Dendritic cell treated with granulocyte-macrophage colony-stimulating factor and Interleukin-4, amounts not matched to agents 40 ng/mL and 50 ng/mL, for 4 days (primary cell): ENCODE measurements at regions of chr12 and their contacts with region 1.

Region 1: DNA sequence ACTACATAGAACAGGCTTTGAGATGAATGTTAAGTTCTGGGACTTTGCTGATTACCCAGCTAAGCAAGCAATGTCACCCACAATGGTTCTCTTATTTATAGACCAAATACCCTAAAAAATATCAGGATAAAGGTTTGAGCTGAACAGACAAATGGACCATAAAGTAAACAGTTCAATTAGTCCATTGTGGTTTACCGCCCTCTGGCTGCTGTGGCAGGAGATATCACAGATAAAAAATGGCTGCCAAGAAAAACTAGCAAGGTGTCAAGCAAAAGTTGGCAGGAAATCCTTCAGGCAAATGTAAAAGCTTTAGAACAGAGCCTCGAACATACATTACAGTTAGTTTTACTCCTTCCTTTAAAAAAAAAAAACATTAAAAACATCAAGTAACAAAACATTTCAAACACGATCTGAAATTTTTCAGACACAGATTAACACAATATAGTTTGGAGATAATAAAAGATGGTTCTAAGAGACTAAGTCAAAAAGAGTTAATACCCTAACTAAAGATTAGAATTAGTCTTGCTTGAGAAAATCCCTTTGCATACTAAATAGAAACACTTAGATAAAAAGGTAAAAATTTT is 41.3 kb downstream of the MED13L start:
- H3K4me3 Mint-ChIP-seq: no peak overlapping the region
- H3K27ac Mint-ChIP-seq: no peak overlapping the region
- H3K4me1 Mint-ChIP-seq: peaks cover 26% of the 10 kb centered on the region
- H3K27me3 Mint-ChIP-seq: no peaks in the 10 kb centered on the region

Region 2: GRCh38 chr12:116066381-116067230 is 169.6 kb before region 1 on chr12:
- intact Hi-C with region 1: loop called (anchors 10 kb)
- H3K4me3 Mint-ChIP-seq: no peak overlapping the region
- H3K27ac Mint-ChIP-seq: no peak overlapping the region
- H3K4me1 Mint-ChIP-seq: peaks cover 47% of the 10 kb centered on the region
- H3K27me3 Mint-ChIP-seq: no peaks in the 10 kb centered on the region

Region 3: GRCh38 chr12:116142936-116143898 is 93.0 kb before region 1 on chr12:
- intact Hi-C with region 1: no loop called
- H3K4me3 Mint-ChIP-seq: peak overlapping the region; percentile 48
- H3K27ac Mint-ChIP-seq: peak overlapping the region; percentile 62
- H3K4me1 Mint-ChIP-seq: peaks cover 53% of the 10 kb centered on the region
- H3K27me3 Mint-ChIP-seq: no peaks in the 10 kb centered on the region

Region 4: DNA sequence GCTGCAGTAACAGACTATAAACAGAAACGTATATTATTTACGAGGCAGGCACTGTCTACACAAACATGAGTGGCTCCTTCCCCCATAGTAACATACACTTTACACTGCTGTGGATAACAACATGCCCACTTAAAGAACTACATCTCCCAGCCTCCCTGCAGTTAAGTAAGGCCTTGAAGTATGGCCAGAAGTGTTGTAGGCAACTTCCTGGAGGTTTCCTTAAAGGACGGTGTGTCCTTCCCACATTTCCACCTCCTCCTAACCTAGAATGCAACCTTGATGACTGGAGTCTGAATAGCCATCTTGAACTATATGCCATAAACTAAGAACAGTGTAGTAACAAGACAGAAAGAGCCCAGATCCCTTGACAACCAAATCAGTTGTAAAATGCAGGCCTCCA is 21.0 kb after region 1 on chr12:
- intact Hi-C with region 1: no loop called
- H3K4me3 Mint-ChIP-seq: no peak overlapping the region
- H3K27ac Mint-ChIP-seq: no peak overlapping the region
- H3K4me1 Mint-ChIP-seq: peaks cover 29% of the 10 kb centered on the region
- H3K27me3 Mint-ChIP-seq: no peaks in the 10 kb centered on the region

Region 5: DNA sequence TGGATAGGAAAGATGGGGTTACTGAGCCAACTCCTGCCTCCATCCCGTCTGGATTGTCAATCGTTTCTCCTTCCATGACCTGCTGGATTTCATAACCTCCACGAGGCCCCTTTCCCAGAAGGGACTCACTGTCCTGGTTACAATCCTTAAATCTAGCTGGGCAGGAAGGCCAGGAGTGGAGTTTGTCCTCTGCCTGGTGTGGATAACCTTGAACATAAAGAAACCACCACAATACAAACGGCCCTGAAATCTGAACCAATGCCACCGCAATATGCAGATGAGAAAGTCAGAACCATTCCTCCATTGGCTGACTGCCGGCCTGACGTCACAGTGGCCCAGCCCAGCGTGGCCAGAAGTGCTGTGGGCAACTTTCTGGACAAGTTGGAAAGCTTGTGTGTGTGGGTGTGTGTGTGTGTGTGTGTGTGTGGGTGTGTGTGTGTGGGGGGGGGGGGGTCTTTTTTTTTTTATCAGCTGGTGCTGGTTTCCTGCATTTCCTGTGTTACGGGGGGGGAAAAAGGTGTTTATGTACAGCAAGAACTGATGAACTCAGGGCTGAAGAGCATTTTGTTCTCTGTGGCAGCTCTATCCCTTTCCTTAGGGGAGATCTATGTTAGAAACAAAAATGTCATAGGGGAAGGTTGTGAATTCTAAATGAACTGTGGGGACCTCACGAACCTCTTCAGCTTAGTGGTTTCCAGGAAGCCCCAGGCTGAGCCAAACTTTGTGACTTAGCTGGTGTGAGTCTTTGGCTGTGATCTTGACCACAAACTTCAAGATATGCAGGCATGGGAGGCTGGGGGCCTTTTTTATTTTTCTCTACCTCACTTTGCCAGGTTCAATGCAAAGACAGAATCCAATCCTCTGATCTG is 122.9 kb after region 1 on chr12:
- intact Hi-C with region 1: no loop called
- H3K4me3 Mint-ChIP-seq: peak overlapping the region; percentile 50
- H3K27ac Mint-ChIP-seq: peak overlapping the region; percentile 83
- H3K4me1 Mint-ChIP-seq: peaks cover 45% of the 10 kb centered on the region
- H3K27me3 Mint-ChIP-seq: peaks cover 2% of the 10 kb centered on the region

Region 6: GRCh38 chr12:116426391-116427136 is 190.3 kb after region 1 on chr12:
- intact Hi-C with region 1: no loop called
- H3K4me3 Mint-ChIP-seq: no peak overlapping the region
- H3K27ac Mint-ChIP-seq: no peak overlapping the region
- H3K4me1 Mint-ChIP-seq: no peaks in the 10 kb centered on the region
- H3K27me3 Mint-ChIP-seq: no peaks in the 10 kb centered on the region